ENCODE measurements at regions of chr3 and their contacts with region 1.

Region 1: DNA sequence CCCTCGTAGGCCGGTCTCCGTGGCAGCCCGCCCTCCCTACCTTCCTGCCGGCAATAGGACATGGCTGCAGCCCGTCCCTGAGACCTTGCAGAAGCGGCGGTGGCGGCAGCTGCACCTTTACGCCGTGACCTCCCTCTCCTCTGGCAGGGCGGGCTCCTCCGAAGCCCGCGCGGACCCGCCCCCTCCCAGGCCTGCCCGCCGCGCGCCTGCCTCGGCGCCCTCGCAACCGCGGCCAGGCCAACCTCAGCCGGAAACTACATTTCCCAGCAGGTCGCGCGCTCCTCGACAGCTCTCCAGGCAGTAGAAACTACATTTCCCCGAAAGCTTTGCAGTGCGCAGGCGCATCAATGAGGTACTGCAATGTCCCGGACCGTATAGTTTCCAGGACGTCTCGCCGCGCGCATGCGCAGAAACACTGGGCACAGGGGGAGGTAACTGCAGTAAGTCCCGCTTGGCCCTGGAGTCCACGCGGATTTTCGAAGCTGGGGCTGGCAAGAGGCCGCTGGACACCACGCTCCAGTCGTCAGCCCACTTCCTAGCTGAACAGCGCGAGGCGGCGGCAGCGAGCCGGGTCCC is at the starts of genes CHCHD4 and TMEM43:
- DNase-seq: peak; percentile 97 to 98
- H3K4me3 ChIP-seq: peak within 1 kb of the TSS; percentile 87
- H3K4me1 ChIP-seq: peaks cover 10% of the 10 kb centered on the region
- H3K27me3 ChIP-seq: no peaks in the 10 kb centered on the region

Region 2: GRCh38 chr3:13537921-13538320 is 586.8 kb before region 1 on chr3:
- in situ Hi-C with region 1: no loop called
- DNase-seq: no peak
- H3K4me3 ChIP-seq: no peak overlapping the region
- H3K4me1 ChIP-seq: no peaks in the 10 kb centered on the region
- H3K27me3 ChIP-seq: peaks cover 3% of the 10 kb centered on the region; the same call in 1 of the 2 replicates

Region 3: GRCh38 chr3:13895155-13896105 is 229.3 kb before region 1 on chr3:
- in situ Hi-C with region 1: loop called (anchors 5 kb)
- DNase-seq: peak; percentile 58 to 89
- H3K4me3 ChIP-seq: peak overlapping the region; percentile 22
- H3K4me1 ChIP-seq: peaks cover 2% of the 10 kb centered on the region; the same call in 1 of the 2 replicates
- H3K27me3 ChIP-seq: no peaks in the 10 kb centered on the region; the same call in 1 of the 2 replicates

Region 4: DNA sequence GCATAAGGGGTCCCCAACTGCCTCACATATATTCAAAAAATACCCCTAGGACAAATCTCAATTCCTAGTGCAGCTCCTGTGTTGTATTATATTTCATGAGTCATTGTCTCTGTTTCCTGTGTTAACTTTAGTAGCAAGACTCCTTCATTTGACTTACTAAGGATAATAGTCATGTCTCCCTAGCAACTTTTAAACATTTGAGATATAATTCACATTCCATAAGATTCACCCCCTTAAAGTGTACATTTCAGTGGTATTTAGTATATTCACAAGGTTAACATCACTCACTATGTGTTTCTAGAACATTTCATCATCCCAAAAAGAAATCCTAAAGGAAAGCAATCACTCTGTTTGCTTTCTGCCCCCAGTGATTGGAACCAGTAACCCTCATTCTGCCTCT is 123.6 kb before region 1 on chr3:
- in situ Hi-C with region 1: loop called (anchors 10 kb)
- DNase-seq: no peak
- H3K4me3 ChIP-seq: no peak overlapping the region
- H3K4me1 ChIP-seq: peaks cover 10% of the 10 kb centered on the region
- H3K27me3 ChIP-seq: no peaks in the 10 kb centered on the region; the same call in 1 of the 2 replicates

Region 5: GRCh38 chr3:14222900-14223594 is 98.3 kb after region 1 on chr3:
- in situ Hi-C with region 1: no loop called
- DNase-seq: no peak
- H3K4me3 ChIP-seq: no peak overlapping the region
- H3K4me1 ChIP-seq: no peaks in the 10 kb centered on the region
- H3K27me3 ChIP-seq: peaks cover 10% of the 10 kb centered on the region; the same call in 1 of the 2 replicates